ENCODE measurements at regions of chr1 and their contacts with region 1.

Region 1: GRCh38 chr1:6245086-6245868 is 1.3 kb downstream of the HES3 start:
- DNase-seq: no peak
- H3K4me3 ChIP-seq: peak overlapping the region in 1 of 4 donors; percentile 5
- H3K27ac ChIP-seq: no peak overlapping the region
- H3K4me1 ChIP-seq: peaks cover 30 to 65% (median 47%) of the 10 kb centered on the region in 4 donors
- H3K27me3 ChIP-seq: peaks cover 26 to 100% (median 68%) of the 10 kb centered on the region in 4 donors
- CTCF ChIP-seq: peak; percentile 83 to 88 (median 84)
- EP300 ChIP-seq: no peak
- POLR2A ChIP-seq: no peak

Region 2: GRCh38 chr1:6052543-6053205 is 192.6 kb before region 1 on chr1:
- intact Hi-C with region 1: loop called (anchors 2 kb)
- DNase-seq: no peak
- H3K4me3 ChIP-seq: no peak overlapping the region
- H3K27ac ChIP-seq: no peak overlapping the region
- H3K4me1 ChIP-seq: peaks cover 3 to 12% (median 7%) of the 10 kb centered on the region in 4 donors
- H3K27me3 ChIP-seq: peaks cover 0 to 3% (median 0%) of the 10 kb centered on the region in 4 donors
- CTCF ChIP-seq: peak in 1 of 3 experiments; percentile 38
- EP300 ChIP-seq: no peak
- POLR2A ChIP-seq: no peak

Region 3: DNA sequence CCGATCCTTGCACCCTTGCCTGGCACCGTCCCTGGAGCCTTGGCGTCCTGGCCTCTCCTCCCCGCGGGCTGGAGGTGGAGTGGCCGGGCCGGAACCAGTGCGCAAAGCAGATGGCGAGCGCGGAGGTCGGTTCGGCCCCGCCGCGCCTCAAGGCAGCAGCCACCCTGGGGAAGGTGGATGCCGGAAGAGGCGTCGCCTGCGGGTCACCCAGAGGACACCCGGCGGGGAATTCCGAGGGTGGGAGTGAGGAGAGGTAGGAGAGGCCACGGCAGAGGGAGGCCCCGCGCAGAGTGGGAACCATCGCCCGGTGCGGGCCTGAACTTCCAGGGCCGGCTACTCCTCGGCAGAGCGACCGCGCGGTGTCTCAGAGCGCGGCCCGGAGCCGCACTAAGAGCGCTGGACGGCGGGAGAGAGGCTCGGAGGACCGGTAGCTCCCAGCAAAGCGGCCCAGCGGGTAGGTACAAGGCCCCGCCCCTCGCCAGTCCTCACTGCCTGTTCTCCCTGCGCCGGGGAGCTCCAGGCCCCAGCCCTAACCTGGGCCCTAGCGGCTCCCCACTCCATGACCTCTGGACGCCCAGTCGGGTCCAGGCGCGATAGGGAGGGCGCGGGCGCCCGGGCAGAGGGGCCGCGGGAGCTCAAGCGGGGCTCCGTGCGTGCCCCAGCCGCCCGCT is 39.3 kb before region 1 on chr1 and contains the start of gene RNF207:
- intact Hi-C with region 1: loop called (anchors 2 kb)
- DNase-seq: no peak
- H3K4me3 ChIP-seq: peak within 1 kb of the TSS; percentile 58 to 71 (median 64)
- H3K27ac ChIP-seq: peak within 1 kb of the TSS; percentile 78 to 88 (median 82)
- H3K4me1 ChIP-seq: peaks cover 49 to 56% (median 53%) of the 10 kb centered on the region in 4 donors
- H3K27me3 ChIP-seq: peaks cover 0 to 15% (median 4%) of the 10 kb centered on the region in 4 donors
- CTCF ChIP-seq: no peak
- EP300 ChIP-seq: no peak
- POLR2A ChIP-seq: peak; percentile 59
- total RNA-seq, gene RNF207: 10.8 to 43.2 (median 20.2) TPM

Region 4: GRCh38 chr1:6343506-6344405 is 98.5 kb after region 1 on chr1:
- intact Hi-C with region 1: loop called (anchors 2 kb)
- DNase-seq: no peak
- H3K4me3 ChIP-seq: no peak overlapping the region
- H3K27ac ChIP-seq: no peak overlapping the region
- H3K4me1 ChIP-seq: peaks cover 7 to 10% (median 10%) of the 10 kb centered on the region in 4 donors
- H3K27me3 ChIP-seq: no peaks in the 10 kb centered on the region
- CTCF ChIP-seq: peak; percentile 72 to 76 (median 72)
- EP300 ChIP-seq: no peak
- POLR2A ChIP-seq: no peak

Region 5: GRCh38 chr1:6401673-6402072 is 156.4 kb after region 1 on chr1:
- intact Hi-C with region 1: loop called (anchors 2 kb)
- DNase-seq: no peak
- H3K4me3 ChIP-seq: no peak overlapping the region
- H3K27ac ChIP-seq: no peak overlapping the region
- H3K4me1 ChIP-seq: no peaks in the 10 kb centered on the region
- H3K27me3 ChIP-seq: peaks cover 0 to 13% (median 0%) of the 10 kb centered on the region in 4 donors
- CTCF ChIP-seq: no peak
- EP300 ChIP-seq: no peak
- POLR2A ChIP-seq: no peak